IMR-90 (cell line): ENCODE measurements at regions of chr6 and their contacts with region 1.

Region 1: DNA sequence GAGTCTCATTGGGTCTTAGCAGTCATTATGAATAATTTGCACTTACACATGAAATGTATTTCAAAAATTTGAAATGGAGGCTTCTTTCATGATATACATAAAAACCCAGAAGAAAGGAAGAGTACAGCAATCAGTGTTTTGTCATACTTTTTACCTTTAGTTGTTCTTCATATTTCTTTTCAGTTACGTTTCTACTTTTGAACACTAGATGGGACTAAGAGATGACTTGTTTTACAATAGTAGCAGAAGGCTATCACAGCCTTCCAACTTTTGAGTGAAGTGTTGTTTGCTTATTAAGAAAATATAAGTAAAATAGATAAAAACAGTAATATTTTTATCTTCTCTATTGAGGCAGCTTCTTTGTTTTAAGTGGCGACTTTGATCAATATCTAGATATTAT is 58.1 kb downstream of the L3MBTL3 start:
- DNase-seq: peak; percentile 13
- ATAC-seq: no peak
- H3K4me3 ChIP-seq: no peak overlapping the region
- H3K27ac ChIP-seq: no peak overlapping the region
- H3K4me1 ChIP-seq: peaks cover 2% of the 10 kb centered on the region; the same call in 1 of the 2 replicates
- H3K27me3 ChIP-seq: no peaks in the 10 kb centered on the region
- CTCF ChIP-seq: peak; percentile 33
- POLR2A ChIP-seq: no peak
- RAD21 ChIP-seq: peak; percentile 30; the same call in 1 of the 2 replicates

Region 2: GRCh38 chr6:130129762-130130246 is 53.3 kb after region 1 on chr6:
- CTCF ChIA-PET with region 1: no interaction called
- POLR2A ChIA-PET with region 1: no interaction called
- dilution Hi-C with region 1: no loop called
- in situ Hi-C with region 1: no loop called
- intact Hi-C with region 1: no loop called
- DNase-seq: peak; percentile 80
- ATAC-seq: peak; percentile 75
- H3K4me3 ChIP-seq: no peak overlapping the region
- H3K27ac ChIP-seq: no peak overlapping the region
- H3K4me1 ChIP-seq: peaks cover 3% of the 10 kb centered on the region; the same call in 1 of the 2 replicates
- H3K27me3 ChIP-seq: no peaks in the 10 kb centered on the region
- CTCF ChIP-seq: no peak
- POLR2A ChIP-seq: no peak
- RAD21 ChIP-seq: no peak

Region 3: DNA sequence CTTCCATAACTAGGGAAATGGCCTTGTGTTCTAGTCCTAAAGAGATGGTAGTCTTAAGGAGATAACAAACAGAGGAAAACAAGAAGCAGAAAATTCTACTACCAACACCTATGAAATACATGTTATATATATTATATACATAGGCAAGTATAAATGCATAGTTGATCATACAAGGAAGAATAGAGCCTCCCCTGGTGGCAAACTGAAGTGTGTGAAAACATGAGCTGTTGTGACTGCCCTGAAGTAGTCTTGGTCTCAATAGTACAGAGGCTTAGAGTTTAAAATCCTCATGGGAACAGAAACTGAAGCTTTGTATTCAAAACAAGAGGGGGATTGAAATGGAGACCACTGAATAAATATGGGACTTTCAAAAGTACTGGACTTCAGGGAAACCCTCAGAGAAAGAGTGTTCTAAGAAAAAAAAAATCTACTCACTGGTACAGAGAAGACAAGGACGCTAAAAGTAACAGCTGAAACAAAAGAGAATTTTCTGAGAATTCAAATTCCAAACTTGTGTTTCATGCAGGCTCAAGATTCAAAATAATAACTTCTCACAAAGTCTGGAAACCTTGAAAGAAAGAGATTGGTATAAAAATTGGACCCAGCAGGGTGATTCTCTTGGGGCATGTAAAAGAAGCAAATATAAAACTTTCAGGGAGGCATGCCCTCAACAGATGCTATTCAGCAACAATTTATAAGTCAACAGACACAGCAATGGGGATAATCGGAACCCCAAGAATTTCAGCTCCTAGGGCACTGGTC is 205.9 kb after region 1 on chr6:
- CTCF ChIA-PET with region 1: interaction called, 3 read pairs
- POLR2A ChIA-PET with region 1: no interaction called
- dilution Hi-C with region 1: no loop called
- in situ Hi-C with region 1: no loop called
- intact Hi-C with region 1: loop called (anchors 5 kb)
- DNase-seq: peak; percentile 45
- ATAC-seq: peak; percentile 85
- H3K4me3 ChIP-seq: no peak overlapping the region
- H3K27ac ChIP-seq: no peak overlapping the region
- H3K4me1 ChIP-seq: no peaks in the 10 kb centered on the region
- H3K27me3 ChIP-seq: peaks cover 2% of the 10 kb centered on the region; the same call in 1 of the 2 replicates
- CTCF ChIP-seq: peak; percentile 46
- POLR2A ChIP-seq: no peak
- RAD21 ChIP-seq: peak; percentile 46

Region 4: DNA sequence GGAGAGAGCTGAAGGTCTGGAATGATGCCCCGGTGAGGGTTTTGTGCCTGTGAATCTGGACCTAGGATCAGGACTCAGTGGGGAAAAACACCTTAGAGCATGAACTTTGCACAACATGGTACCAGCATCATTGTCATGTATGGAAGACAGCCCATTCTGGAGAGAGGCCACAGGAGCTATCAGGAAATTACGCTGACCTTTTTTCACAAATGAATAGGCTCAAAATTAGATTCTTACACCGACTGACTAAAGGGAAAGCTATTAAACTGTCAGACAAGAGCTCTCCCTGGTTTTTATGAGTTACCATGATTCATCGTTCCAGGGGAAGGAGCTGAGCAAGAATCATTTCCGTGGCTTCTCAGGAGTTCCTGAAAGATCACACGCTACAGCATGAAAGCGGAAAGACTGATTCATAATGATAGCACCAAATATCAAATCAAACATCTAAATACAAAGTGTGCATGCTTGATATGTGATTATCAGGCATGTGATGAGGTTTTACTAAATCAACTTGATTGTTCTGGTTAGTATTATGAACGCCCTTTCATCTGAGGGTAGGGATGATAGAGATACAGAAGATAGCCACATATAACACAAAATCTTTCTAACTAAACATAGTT is 525.7 kb after region 1 on chr6:
- CTCF ChIA-PET with region 1: no interaction called
- POLR2A ChIA-PET with region 1: no interaction called
- dilution Hi-C with region 1: no loop called
- in situ Hi-C with region 1: no loop called
- intact Hi-C with region 1: no loop called
- DNase-seq: peak; percentile 98
- ATAC-seq: peak; percentile 84
- H3K4me3 ChIP-seq: no peak overlapping the region
- H3K27ac ChIP-seq: peak overlapping the region; percentile 90
- H3K4me1 ChIP-seq: peaks cover 12% of the 10 kb centered on the region
- H3K27me3 ChIP-seq: no peaks in the 10 kb centered on the region
- CTCF ChIP-seq: no peak
- POLR2A ChIP-seq: no peak
- RAD21 ChIP-seq: no peak; the same call in 1 of the 2 replicates